ENCODE measurements at regions of chr2 and their contacts with region 1.

Region 1: GRCh38 chr2:223051693-223052289 is at the start of gene KCNE4:
- DNase-seq: peak in 1 of 2 donors; percentile 72
- H3K4me3 ChIP-seq: peak within 1 kb of the TSS; percentile 57 to 68
- H3K27ac ChIP-seq: peak within 1 kb of the TSS; percentile 80 to 83
- H3K4me1 ChIP-seq: peaks cover 15 to 42% of the 10 kb centered on the region in 2 donors
- H3K27me3 ChIP-seq: no peaks in the 10 kb centered on the region
- CTCF ChIP-seq: no peak
- total RNA-seq, gene KCNE4: 18.3 TPM

Region 2: DNA sequence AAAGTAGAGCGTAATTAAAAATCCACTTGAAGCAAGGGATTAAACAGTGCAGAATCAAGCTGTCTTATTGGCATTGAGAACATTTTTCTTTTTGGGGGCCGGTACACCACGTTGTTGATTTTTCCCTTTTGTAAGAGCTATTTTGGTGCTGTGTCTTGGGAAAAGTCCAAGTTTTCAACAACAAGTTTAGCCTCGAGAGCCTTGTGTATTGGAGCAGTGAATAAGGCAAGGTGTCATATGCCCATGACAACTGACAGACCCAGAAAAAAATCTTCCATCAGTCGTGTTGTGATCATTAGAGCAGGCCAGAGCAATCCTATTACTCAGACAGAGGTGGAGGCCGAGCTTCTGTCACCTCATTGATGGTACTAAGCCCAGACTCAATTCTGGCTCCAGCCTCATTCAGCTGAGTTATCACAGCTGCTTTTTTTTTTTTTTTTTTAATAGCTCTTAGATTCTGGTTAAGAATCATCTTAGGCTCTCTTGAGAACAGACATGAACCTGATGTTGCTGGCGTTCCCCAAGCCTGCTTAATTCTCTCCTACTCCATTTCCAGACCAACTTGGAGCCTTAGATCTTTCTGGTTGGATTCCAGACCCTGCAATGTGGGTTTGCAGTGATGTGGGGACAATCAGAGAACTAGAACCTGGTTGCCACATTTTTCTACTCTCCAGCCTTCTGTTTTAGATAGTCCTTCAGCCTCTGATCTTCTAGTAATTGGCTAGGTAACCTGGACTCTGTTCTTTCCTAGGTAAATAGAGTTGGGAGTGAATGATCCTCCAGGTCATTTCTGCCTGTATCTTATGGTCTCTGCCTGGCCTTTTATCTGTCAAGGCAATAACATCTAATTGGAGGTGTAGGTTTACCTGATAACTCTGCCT is 337.2 kb before region 1 on chr2:
- intact Hi-C with region 1: loop called (anchors 5 kb)
- DNase-seq: peak; percentile 24 to 77
- H3K4me3 ChIP-seq: peak overlapping the region in 1 of 2 donors; percentile 16
- H3K27ac ChIP-seq: peak overlapping the region; percentile 78 to 91
- H3K4me1 ChIP-seq: peaks cover 3 to 29% of the 10 kb centered on the region in 2 donors
- H3K27me3 ChIP-seq: no peaks in the 10 kb centered on the region
- CTCF ChIP-seq: no peak

Region 3: GRCh38 chr2:222993920-222994650 is 57.7 kb before region 1 on chr2:
- intact Hi-C with region 1: loop called (anchors 2 kb)
- DNase-seq: peak; percentile 69 to 94
- H3K4me3 ChIP-seq: peak overlapping the region; percentile 19 to 40
- H3K27ac ChIP-seq: peak overlapping the region; percentile 77 to 96
- H3K4me1 ChIP-seq: peaks cover 9 to 16% of the 10 kb centered on the region in 2 donors
- H3K27me3 ChIP-seq: no peaks in the 10 kb centered on the region
- CTCF ChIP-seq: no peak

Region 4: GRCh38 chr2:223008162-223008561 is 43.6 kb before region 1 on chr2:
- intact Hi-C with region 1: no loop called
- DNase-seq: no peak
- H3K4me3 ChIP-seq: no peak overlapping the region
- H3K27ac ChIP-seq: no peak overlapping the region
- H3K4me1 ChIP-seq: no peaks in the 10 kb centered on the region
- H3K27me3 ChIP-seq: no peaks in the 10 kb centered on the region
- CTCF ChIP-seq: no peak

Region 5: GRCh38 chr2:223101340-223102039 is 49.7 kb after region 1 on chr2:
- intact Hi-C with region 1: loop called (anchors 5 kb)
- DNase-seq: no peak
- H3K4me3 ChIP-seq: no peak overlapping the region
- H3K27ac ChIP-seq: peak overlapping the region in 1 of 2 donors; percentile 24
- H3K4me1 ChIP-seq: peaks cover 0 to 4% of the 10 kb centered on the region in 2 donors
- H3K27me3 ChIP-seq: no peaks in the 10 kb centered on the region
- CTCF ChIP-seq: peak in 2 of 3 experiments; percentile 19 to 41

Region 6: GRCh38 chr2:223214394-223215253 is 162.8 kb after region 1 on chr2:
- intact Hi-C with region 1: no loop called
- DNase-seq: no peak
- H3K4me3 ChIP-seq: no peak overlapping the region
- H3K27ac ChIP-seq: no peak overlapping the region
- H3K4me1 ChIP-seq: no peaks in the 10 kb centered on the region
- H3K27me3 ChIP-seq: no peaks in the 10 kb centered on the region
- CTCF ChIP-seq: no peak

Region 7: GRCh38 chr2:223727562-223727961 is 675.8 kb after region 1 on chr2:
- intact Hi-C with region 1: loop called (anchors 5 kb)
- DNase-seq: no peak
- H3K4me3 ChIP-seq: no peak overlapping the region
- H3K27ac ChIP-seq: peak overlapping the region in 1 of 2 donors; percentile 39
- H3K4me1 ChIP-seq: peaks cover 4 to 9% of the 10 kb centered on the region in 2 donors
- H3K27me3 ChIP-seq: no peaks in the 10 kb centered on the region
- CTCF ChIP-seq: peak in 2 of 3 experiments; percentile 30 to 53

Measured in ascending aorta (tissue), 2 donors.